ENCODE measurements at regions of chr4 and their contacts with region 1.

Region 1: GRCh38 chr4:159150821-159151390 is 48.0 kb downstream of the RAPGEF2 start:
- DNase-seq: peak; percentile 73 to 94 (median 80)
- ATAC-seq: peak; percentile 84
- H3K4me3 ChIP-seq: peak overlapping the region; percentile 1; the same call in 1 of the 2 replicates
- H3K27ac ChIP-seq: peak overlapping the region; percentile 93
- H3K4me1 ChIP-seq: peaks cover 12 to 60% of the 10 kb centered on the region in 2 experiments; a peak in 4 of 5 replicates
- H3K27me3 ChIP-seq: no peaks in the 10 kb centered on the region
- CTCF ChIP-seq: no peak
- EP300 ChIP-seq: peak; percentile 99
- POLR2A ChIP-seq: peak; percentile 49; the same call in 1 of the 2 replicates
- RAD21 ChIP-seq: peak in 1 of 2 experiments; percentile 27; a peak in 1 of 4 replicates

Region 2: DNA sequence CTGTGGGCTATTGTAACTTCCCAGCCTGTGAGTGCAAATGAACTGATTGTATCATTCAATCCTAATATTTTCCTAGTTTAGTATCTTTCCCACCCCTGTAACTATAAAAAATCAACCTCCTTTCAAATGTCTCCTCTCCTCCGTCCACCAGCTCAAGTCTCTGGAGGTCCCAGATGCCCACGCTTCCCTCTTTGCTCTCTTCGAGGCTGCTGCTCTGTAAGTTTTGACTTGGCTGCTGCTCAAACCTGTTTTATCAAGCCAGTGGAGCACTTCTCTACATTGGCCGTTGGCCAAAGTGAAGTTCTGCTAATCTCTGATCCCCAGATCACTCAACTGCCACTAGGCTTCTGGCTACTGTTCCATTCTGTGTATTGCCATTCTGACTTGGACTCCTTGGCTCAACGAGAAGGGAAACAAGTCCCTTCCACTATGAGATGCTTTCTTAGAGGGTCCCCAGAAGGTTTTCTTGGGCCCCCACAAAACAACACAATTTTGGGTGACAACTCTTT is 108.8 kb before region 1 on chr4:
- CTCF ChIA-PET with region 1: no interaction called
- POLR2A ChIA-PET with region 1: no interaction called
- in situ Hi-C with region 1: no loop called
- intact Hi-C with region 1: loop called (anchors 5 kb)
- DNase-seq: peak; percentile 50 to 98 (median 70)
- ATAC-seq: peak; percentile 88
- H3K4me3 ChIP-seq: peak overlapping the region; percentile 21
- H3K27ac ChIP-seq: peak overlapping the region; percentile 84
- H3K4me1 ChIP-seq: peaks cover 26 to 39% of the 10 kb centered on the region in 2 experiments
- H3K27me3 ChIP-seq: no peaks in the 10 kb centered on the region
- CTCF ChIP-seq: 0 out of 6 replicates have a peak, but pooled peaks of 1 of the 3 experiments have one; percentile 16
- EP300 ChIP-seq: peak; percentile 99
- POLR2A ChIP-seq: peak; percentile 62
- RAD21 ChIP-seq: peak in 1 of 2 experiments; percentile 41; a peak in 3 of 4 replicates

Measured in K562 (cell line).